ENCODE measurements at regions of chr3 and their contacts with region 1.

Region 1: DNA sequence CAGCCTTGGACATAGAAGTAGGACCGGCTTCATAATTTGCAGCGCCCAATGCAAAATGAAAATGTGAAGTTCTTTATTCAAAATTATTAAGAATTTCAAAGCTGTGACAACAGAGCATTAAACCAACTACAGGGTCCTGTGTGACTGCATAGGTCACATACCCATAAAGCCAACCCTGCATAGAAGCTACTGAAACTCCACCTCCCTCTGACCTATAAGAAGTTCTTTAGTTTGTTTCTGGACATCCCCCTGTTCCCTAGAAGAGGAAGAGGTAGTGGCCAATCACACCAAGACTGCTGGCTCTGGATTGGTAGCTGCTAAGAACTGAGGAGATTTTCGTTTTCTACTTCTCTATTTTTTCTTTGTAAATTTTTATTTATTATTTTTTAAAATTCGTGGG is 9.0 kb upstream of the SELENOT start:
- DNase-seq: no peak
- ATAC-seq: no peak
- H3K4me3 ChIP-seq: no peak overlapping the region
- H3K27ac ChIP-seq: no peak overlapping the region
- H3K4me1 ChIP-seq: peaks cover 10% of the 10 kb centered on the region
- H3K27me3 ChIP-seq: no peaks in the 10 kb centered on the region
- CTCF ChIP-seq: no peak
- EP300 ChIP-seq: no peak
- POLR2A ChIP-seq: no peak
- RAD21 ChIP-seq: no peak

Region 2: GRCh38 chr3:150114873-150115540 is 479.1 kb before region 1 on chr3:
- CTCF ChIA-PET with region 1: no interaction called
- POLR2A ChIA-PET with region 1: no interaction called
- RAD21 ChIA-PET with region 1: no interaction called
- SMC1A ChIA-PET with region 1: no interaction called
- in situ Hi-C with region 1: no loop called
- intact Hi-C with region 1: no loop called
- DNase-seq: peak; percentile 69
- ATAC-seq: peak; percentile 95
- H3K4me3 ChIP-seq: peak overlapping the region; percentile 19; the same call in 1 of the 2 replicates
- H3K27ac ChIP-seq: peak overlapping the region; percentile 43; the same call in 1 of the 2 replicates
- H3K4me1 ChIP-seq: peaks cover 27% of the 10 kb centered on the region
- H3K27me3 ChIP-seq: no peaks in the 10 kb centered on the region
- CTCF ChIP-seq: no peak
- EP300 ChIP-seq: peak; percentile 70 to 89; a peak in 3 of 4 replicates
- POLR2A ChIP-seq: no peak
- RAD21 ChIP-seq: no peak

Region 3: DNA sequence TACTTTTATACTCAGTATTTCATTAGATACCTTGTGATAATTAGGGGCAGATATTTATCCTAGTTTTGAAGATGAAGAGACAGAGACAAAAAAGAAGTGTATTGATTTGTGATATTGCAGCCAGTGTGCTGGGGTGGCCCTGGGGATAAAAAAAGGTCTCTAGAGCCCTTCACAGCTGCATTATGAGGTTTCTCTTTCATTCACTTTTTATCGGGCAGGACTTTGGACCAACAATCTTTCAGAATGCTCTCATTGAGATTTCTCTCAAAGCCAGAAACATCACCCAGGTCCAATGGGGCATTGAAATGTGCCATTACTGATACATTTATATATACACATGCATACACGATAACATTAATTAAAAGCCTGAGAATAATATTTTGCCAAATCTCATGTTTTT is 11.5 kb before region 1 on chr3:
- CTCF ChIA-PET with region 1: interaction called, 18 read pairs
- POLR2A ChIA-PET with region 1: interaction called, 22 read pairs
- RAD21 ChIA-PET with region 1: interaction called, 25 read pairs
- SMC1A ChIA-PET with region 1: interaction called, 26 read pairs
- in situ Hi-C with region 1: no loop called
- intact Hi-C with region 1: loop called (anchors 1 kb)
- DNase-seq: no peak
- ATAC-seq: peak; percentile 89
- H3K4me3 ChIP-seq: no peak overlapping the region
- H3K27ac ChIP-seq: peak overlapping the region; percentile 88
- H3K4me1 ChIP-seq: peaks cover 12% of the 10 kb centered on the region
- H3K27me3 ChIP-seq: no peaks in the 10 kb centered on the region
- CTCF ChIP-seq: no peak
- EP300 ChIP-seq: no peak
- POLR2A ChIP-seq: no peak
- RAD21 ChIP-seq: no peak

Region 4: GRCh38 chr3:150703299-150704134 is 109.4 kb after region 1 on chr3 and contains the start of gene ERICH6:
- CTCF ChIA-PET with region 1: interaction called, 5 read pairs
- POLR2A ChIA-PET with region 1: interaction called, 5 read pairs
- RAD21 ChIA-PET with region 1: interaction called, 10 read pairs
- SMC1A ChIA-PET with region 1: interaction called, 5 read pairs
- in situ Hi-C with region 1: no loop called
- intact Hi-C with region 1: no loop called
- DNase-seq: peak; percentile 55
- ATAC-seq: peak; percentile 100
- H3K4me3 ChIP-seq: peak within 1 kb of the TSS; percentile 62
- H3K27ac ChIP-seq: peak within 1 kb of the TSS; percentile 63
- H3K4me1 ChIP-seq: peaks cover 5% of the 10 kb centered on the region
- H3K27me3 ChIP-seq: no peaks in the 10 kb centered on the region
- CTCF ChIP-seq: peak; percentile 5 to 23 (median 9); a peak in 2 of 6 replicates
- EP300 ChIP-seq: peak in 1 of 2 experiments; percentile 46; a peak in 1 of 4 replicates
- POLR2A ChIP-seq: peak; percentile 80
- RAD21 ChIP-seq: no peak
- polyA plus RNA-seq, gene ERICH6: 0.40 TPM in 1 of 2 experiments, not detected in the other

Measured in GM12878 (cell line).